Posterior vena cava (tissue), 2 donors: ENCODE measurements at regions of chr6 and their contacts with region 1.

Region 1: GRCh38 chr6:22199771-22200170 is 97.1 kb downstream of the PRL start:
- DNase-seq: no peak

Region 2: GRCh38 chr6:23441808-23442461 is 1242.2 kb after region 1 on chr6:
- intact Hi-C with region 1: loop called in 1 of 2 experiments (anchors 5 kb)
- DNase-seq: no peak